ENCODE measurements at regions of chr3 and their contacts with region 1.

Region 1: DNA sequence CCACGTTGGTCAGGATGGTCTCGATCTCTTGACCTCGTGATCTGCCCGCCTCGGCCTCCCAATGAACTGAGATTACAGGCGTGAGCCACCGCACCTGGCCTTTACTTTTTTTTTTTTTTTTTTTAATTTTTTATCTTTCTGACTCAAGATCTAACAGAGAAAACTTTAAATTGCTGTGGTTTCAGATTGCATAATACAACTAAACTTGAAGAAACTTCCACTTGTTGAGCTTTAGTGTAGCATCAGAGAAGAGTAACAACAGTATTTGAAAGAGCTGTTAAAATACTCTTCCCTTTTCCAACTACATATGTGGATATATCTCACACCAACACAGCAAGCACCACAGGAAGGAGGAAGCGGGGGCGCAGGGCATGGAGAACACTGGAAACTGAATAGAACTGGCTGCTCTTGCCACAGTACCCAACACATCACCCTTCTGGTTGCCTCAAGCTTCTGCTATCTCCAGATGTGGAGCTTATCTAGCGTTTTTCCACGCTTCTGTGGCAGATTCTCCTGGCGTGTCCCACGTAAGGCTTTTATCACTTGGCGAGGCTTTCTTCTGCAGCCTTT is 45.4 kb downstream of the MAP6D1 start:
- DNase-seq: no peak
- ATAC-seq: no peak
- H3K4me3 ChIP-seq: no peak overlapping the region
- H3K27ac ChIP-seq: no peak overlapping the region
- H3K4me1 ChIP-seq: no peaks in the 10 kb centered on the region
- H3K27me3 ChIP-seq: no peaks in the 10 kb centered on the region
- CTCF ChIP-seq: no peak

Region 2: GRCh38 chr3:183492681-183493149 is 287.3 kb before region 1 on chr3:
- CTCF ChIA-PET with region 1: no interaction called
- POLR2A ChIA-PET with region 1: interaction called, 11 read pairs
- in situ Hi-C with region 1: no loop called
- intact Hi-C with region 1: no loop called
- DNase-seq: no peak
- ATAC-seq: peak; percentile 22; the same call in 1 of the 2 replicates
- H3K4me3 ChIP-seq: no peak overlapping the region
- H3K27ac ChIP-seq: no peak overlapping the region
- H3K4me1 ChIP-seq: no peaks in the 10 kb centered on the region
- H3K27me3 ChIP-seq: peaks cover 3% of the 10 kb centered on the region; the same call in 1 of the 2 replicates
- CTCF ChIP-seq: no peak